Gastrocnemius medialis (tissue), 4 donors: ENCODE measurements at regions of chr11 and their contacts with region 1.

Region 1: GRCh38 chr11:68297812-68298658 is 14.4 kb upstream of the LRP5 start:
- DNase-seq: peak; percentile 50 to 60
- ATAC-seq: peak; percentile 94 to 96
- H3K4me3 ChIP-seq: peak overlapping the region in 1 of 4 donors; percentile 16
- H3K27ac ChIP-seq: no peak overlapping the region
- H3K4me1 ChIP-seq: peaks cover 0 to 10% of the 10 kb centered on the region in 2 donors
- H3K27me3 ChIP-seq: no peaks in the 10 kb centered on the region
- CTCF ChIP-seq: peak; percentile 89 to 100 (median 98)
- POLR2A ChIP-seq: no peak

Region 2: GRCh38 chr11:68206187-68206601 is 91.8 kb before region 1 on chr11:
- in situ Hi-C with region 1: loop called in 1 of 4 experiments (anchors 5 kb)
- intact Hi-C with region 1: loop called (anchors 2 kb)
- DNase-seq: no peak
- ATAC-seq: peak in 1 of 2 donors; percentile 56
- H3K4me3 ChIP-seq: no peak overlapping the region
- H3K27ac ChIP-seq: peak overlapping the region in 2 of 4 donors; percentile 2 to 16
- H3K4me1 ChIP-seq: peaks cover 48 to 70% of the 10 kb centered on the region in 2 donors
- H3K27me3 ChIP-seq: no peaks in the 10 kb centered on the region
- CTCF ChIP-seq: peak; percentile 50 to 85 (median 66)
- POLR2A ChIP-seq: no peak

Region 3: DNA sequence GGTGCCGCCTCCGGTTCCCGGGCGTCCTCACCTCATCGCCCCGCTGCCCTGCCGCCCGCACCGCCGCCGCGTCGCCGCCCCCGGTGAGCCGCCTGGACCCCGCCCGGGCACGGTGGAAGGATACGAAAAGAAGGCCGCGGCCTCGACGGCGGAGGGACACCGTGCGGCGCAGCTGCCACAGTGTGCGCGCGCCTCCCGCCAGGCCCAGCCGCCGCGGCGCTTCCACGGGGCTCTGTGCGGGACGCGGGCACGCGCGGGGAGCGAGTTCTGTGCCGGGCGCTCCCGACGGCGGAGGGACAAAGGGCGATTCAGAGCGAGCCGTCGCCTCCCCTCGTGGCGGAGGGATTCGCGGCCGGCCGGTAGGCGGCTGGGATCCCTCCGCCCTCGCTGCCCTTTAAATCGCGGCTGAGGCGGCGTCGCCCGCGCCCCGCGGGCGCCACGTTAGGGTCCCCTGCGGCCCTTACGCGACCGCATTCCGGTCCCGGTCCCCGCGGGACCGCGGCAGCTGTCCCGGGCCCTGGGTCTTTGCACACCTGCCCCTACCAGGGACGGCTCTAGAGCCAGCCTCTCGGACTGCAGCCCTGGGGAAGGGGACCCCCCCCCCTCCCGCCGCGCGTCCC is 84.4 kb before region 1 on chr11:
- in situ Hi-C with region 1: loop called in 1 of 4 experiments (anchors 5 kb)
- intact Hi-C with region 1: loop called (anchors 2 kb)
- DNase-seq: peak; percentile 81 to 87
- ATAC-seq: peak; percentile 33 to 37
- H3K4me3 ChIP-seq: peak overlapping the region; percentile 69 to 99 (median 91)
- H3K27ac ChIP-seq: peak overlapping the region; percentile 89 to 100 (median 96)
- H3K4me1 ChIP-seq: peaks cover 41 to 42% of the 10 kb centered on the region in 2 donors
- H3K27me3 ChIP-seq: no peaks in the 10 kb centered on the region
- CTCF ChIP-seq: peak in 4 of 5 experiments; percentile 12 to 68 (median 38)
- POLR2A ChIP-seq: peak; percentile 79 to 90

Region 4: DNA sequence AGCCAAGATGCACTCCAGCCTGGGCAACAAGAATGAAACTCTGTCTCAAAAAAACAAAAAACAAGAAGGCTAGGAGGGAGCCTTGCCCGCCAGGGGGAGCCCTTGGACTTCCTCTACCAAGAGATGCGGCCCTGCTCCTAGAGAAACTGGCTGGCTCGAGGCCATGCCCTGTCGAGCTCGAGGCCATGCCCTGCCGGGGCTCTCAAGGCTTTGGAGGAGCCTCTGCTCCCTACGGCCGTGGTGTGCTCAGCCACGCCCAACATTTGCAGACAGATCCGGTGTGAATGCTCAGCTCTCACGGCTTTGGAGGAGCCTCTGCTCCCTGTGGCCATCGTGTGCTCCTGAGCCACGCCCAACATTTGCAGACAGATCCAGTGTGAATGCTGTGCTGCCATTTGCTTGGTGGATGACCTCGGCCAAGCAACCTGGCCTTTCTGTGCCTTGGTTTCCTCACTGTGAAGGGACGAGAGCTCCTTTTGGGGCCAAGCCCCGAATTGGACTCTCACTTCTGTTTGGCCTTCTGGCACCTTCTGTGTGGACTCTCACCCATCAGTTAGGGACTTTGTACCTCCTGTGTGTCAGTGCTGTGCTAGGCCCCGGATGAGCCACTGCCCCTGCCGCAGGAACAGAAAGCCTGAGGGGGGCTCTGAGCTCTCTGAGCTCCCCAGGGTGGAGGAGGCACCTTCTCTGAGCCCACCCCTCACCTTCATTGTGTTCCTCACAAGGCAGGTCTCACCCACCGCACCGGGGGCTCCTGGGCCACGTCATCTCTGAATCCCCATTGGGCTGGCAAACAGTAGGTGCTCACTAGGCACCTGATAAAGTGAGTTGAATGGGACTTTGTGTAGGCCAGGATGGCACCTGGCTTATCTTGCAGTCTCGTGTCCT is 40.3 kb before region 1 on chr11:
- in situ Hi-C with region 1: loop called (anchors 5 kb)
- intact Hi-C with region 1: loop called (anchors 1 kb)
- DNase-seq: peak; percentile 88 to 93
- ATAC-seq: peak; percentile 82 to 86
- H3K4me3 ChIP-seq: peak overlapping the region in 3 of 4 donors; percentile 8 to 41 (median 15)
- H3K27ac ChIP-seq: no peak overlapping the region
- H3K4me1 ChIP-seq: peaks cover 4 to 9% of the 10 kb centered on the region in 2 donors
- H3K27me3 ChIP-seq: no peaks in the 10 kb centered on the region
- CTCF ChIP-seq: peak; percentile 84 to 93 (median 91)
- POLR2A ChIP-seq: no peak

Region 5: GRCh38 chr11:68271781-68272608 is 26.0 kb before region 1 on chr11 and contains the start of gene C11orf24:
- in situ Hi-C with region 1: no loop called
- intact Hi-C with region 1: loop called (anchors 2 kb)
- DNase-seq: peak; percentile 92 to 94
- ATAC-seq: peak; percentile 92 to 94
- H3K4me3 ChIP-seq: peak within 1 kb of the TSS; percentile 66 to 89 (median 75)
- H3K27ac ChIP-seq: peak within 1 kb of the TSS; percentile 88 to 97 (median 92)
- H3K4me1 ChIP-seq: peaks cover 21 to 31% of the 10 kb centered on the region in 2 donors
- H3K27me3 ChIP-seq: no peaks in the 10 kb centered on the region
- CTCF ChIP-seq: peak in 1 of 5 experiments; percentile 7
- POLR2A ChIP-seq: peak; percentile 77 to 80
- total RNA-seq, gene C11orf24: 8.1 to 19.3 (median 10.6) TPM

Region 6: GRCh38 chr11:68358416-68358815 is 60.4 kb after region 1 on chr11:
- in situ Hi-C with region 1: no loop called
- intact Hi-C with region 1: no loop called
- DNase-seq: no peak
- ATAC-seq: no peak
- H3K4me3 ChIP-seq: no peak overlapping the region
- H3K27ac ChIP-seq: no peak overlapping the region
- H3K4me1 ChIP-seq: peaks cover 16 to 18% of the 10 kb centered on the region in 2 donors
- H3K27me3 ChIP-seq: no peaks in the 10 kb centered on the region
- CTCF ChIP-seq: no peak
- POLR2A ChIP-seq: no peak

Region 7: DNA sequence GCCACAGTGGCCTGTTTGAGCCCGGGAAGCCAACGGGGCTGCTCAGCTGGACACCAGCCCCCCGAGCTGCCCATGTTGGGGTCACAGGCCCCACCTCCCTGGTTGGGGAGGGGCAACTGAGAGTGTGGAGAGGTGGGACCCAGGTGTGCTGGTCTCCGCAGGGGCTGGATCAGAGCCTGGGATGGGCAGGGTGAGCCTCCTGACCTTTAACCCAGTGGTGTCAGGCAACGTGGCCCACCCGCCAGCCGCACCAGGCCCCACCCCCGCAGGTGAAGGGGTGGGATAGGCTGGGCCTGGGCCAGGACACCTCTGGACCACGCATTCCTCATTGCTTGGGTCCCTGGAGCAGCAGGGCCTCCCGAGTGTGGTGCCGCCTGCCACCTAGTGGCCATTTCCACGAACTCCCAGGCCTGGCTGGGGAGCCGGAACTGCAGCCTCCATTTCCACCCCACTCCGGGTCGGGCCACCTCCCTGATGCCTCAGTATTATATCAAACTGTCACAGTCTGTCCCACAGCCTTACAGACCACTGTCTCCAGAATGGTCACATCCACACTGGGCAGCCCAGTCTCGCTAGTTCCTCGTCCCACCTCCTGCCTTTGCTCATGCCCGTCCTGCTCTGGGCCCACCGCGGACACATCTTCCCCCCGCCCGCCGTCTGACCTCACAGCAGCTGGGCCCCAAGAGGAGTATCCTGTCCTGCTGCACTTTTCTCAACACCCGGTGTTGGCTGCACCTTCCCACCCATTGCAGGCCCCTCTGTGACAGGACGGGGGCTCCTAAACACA is 149.2 kb after region 1 on chr11:
- in situ Hi-C with region 1: loop called in 1 of 4 experiments (anchors 25 kb)
- intact Hi-C with region 1: loop called (anchors 5 kb)
- DNase-seq: peak; percentile 51 to 62
- ATAC-seq: peak; percentile 86 to 87
- H3K4me3 ChIP-seq: no peak overlapping the region
- H3K27ac ChIP-seq: no peak overlapping the region
- H3K4me1 ChIP-seq: no peaks in the 10 kb centered on the region
- H3K27me3 ChIP-seq: no peaks in the 10 kb centered on the region
- CTCF ChIP-seq: peak; percentile 80 to 96 (median 95)
- POLR2A ChIP-seq: no peak